PC-3 (cell line): ENCODE measurements at regions of chr17 and their contacts with region 1.

Region 1: GRCh38 chr17:81973432-81973831 is 4.0 kb upstream of the ASPSCR1 start:
- DNase-seq: no peak
- ATAC-seq: no peak
- H3K4me3 ChIP-seq: no peak overlapping the region
- H3K27ac ChIP-seq: no peak overlapping the region
- H3K4me1 ChIP-seq: peaks cover 10% of the 10 kb centered on the region
- H3K27me3 ChIP-seq: no peaks in the 10 kb centered on the region
- CTCF ChIP-seq: no peak

Region 2: GRCh38 chr17:82042649-82043048 is 69.2 kb after region 1 on chr17:
- CTCF ChIA-PET with region 1: no interaction called
- POLR2A ChIA-PET with region 1: interaction called, 12 read pairs
- intact Hi-C with region 1: no loop called
- DNase-seq: no peak
- ATAC-seq: no peak
- H3K4me3 ChIP-seq: no peak overlapping the region
- H3K27ac ChIP-seq: no peak overlapping the region
- H3K4me1 ChIP-seq: peaks cover 4% of the 10 kb centered on the region
- H3K27me3 ChIP-seq: no peaks in the 10 kb centered on the region
- CTCF ChIP-seq: no peak